ENCODE measurements at regions of chr1 and their contacts with region 1.

Region 1: DNA sequence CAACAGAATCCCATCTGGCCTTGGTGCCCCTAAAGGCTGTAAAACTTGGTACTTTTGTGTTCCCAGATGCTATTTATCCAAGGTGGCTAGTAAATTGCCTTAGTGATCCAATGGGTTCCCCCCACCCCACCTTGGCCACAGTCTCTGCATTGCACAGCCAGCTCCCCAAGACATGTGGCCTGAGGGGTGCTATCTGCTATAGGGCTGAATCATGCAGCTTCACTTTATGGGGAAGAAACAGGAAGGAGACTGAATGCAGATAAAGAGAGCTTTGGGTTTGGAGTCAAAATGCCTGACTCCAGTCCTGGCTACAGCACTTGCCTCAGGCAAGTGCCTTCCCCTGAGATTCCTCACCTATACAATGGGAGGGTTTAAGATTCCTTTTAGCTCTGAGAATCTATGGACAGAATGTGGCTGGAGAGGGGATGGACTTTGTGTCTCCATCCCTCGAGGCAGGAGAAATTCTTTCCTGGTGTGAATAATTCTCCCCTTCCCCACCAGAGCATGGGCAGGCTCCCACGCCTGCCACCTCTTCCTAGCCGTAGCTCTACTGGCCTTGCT is 6.5 kb downstream of the RHEX start:
- DNase-seq: no peak
- ATAC-seq: no peak
- H3K4me3 ChIP-seq: no peak overlapping the region
- H3K27ac ChIP-seq: no peak overlapping the region
- H3K4me1 ChIP-seq: peaks cover 38% of the 10 kb centered on the region
- H3K27me3 ChIP-seq: no peaks in the 10 kb centered on the region
- CTCF ChIP-seq: no peak
- EP300 ChIP-seq: no peak
- POLR2A ChIP-seq: no peak
- RAD21 ChIP-seq: no peak

Region 2: GRCh38 chr1:205680073-205680851 is 379.2 kb before region 1 on chr1 and contains the start of gene SLC45A3:
- CTCF ChIA-PET with region 1: no interaction called
- POLR2A ChIA-PET with region 1: no interaction called
- in situ Hi-C with region 1: no loop called
- intact Hi-C with region 1: loop called (anchors 2 kb)
- DNase-seq: no peak
- ATAC-seq: peak; percentile 33
- H3K4me3 ChIP-seq: peak within 1 kb of the TSS; percentile 62 to 79 (median 74)
- H3K27ac ChIP-seq: no peak within 1 kb of the TSS
- H3K4me1 ChIP-seq: peaks cover 60% of the 10 kb centered on the region
- H3K27me3 ChIP-seq: peaks cover 0 to 2% of the 10 kb centered on the region in 2 experiments; a peak in 2 of 5 replicates
- CTCF ChIP-seq: no peak
- EP300 ChIP-seq: no peak
- POLR2A ChIP-seq: no peak
- RAD21 ChIP-seq: no peak
- total RNA-seq, gene SLC45A3: 1.9 and 3.4 TPM in 2 replicates

Region 3: DNA sequence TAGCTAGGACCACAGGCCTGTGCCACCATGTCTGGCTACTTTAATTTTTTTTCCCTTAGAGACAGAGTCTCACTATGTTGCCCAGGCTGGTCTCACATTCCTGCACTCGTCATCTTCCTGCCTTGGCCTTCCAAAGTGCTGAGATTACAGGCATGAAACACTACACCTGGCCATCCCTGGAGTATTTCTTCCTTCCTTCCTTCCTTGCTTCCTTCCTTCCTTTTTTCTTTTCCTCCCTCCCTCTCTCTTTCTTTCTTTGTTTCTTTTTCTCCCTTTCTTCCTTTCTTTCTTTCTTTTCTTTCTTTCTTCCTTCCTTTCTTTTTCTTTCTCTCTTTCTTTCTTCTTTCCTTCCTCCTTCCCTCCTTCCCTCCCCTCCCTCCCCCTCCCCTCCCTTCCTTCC is 163.1 kb before region 1 on chr1:
- CTCF ChIA-PET with region 1: no interaction called
- POLR2A ChIA-PET with region 1: no interaction called
- in situ Hi-C with region 1: no loop called
- intact Hi-C with region 1: no loop called
- DNase-seq: no peak
- ATAC-seq: no peak
- H3K4me3 ChIP-seq: no peak overlapping the region
- H3K27ac ChIP-seq: no peak overlapping the region
- H3K4me1 ChIP-seq: no peaks in the 10 kb centered on the region
- H3K27me3 ChIP-seq: no peaks in the 10 kb centered on the region
- CTCF ChIP-seq: no peak
- EP300 ChIP-seq: no peak
- POLR2A ChIP-seq: no peak
- RAD21 ChIP-seq: no peak

Region 4: GRCh38 chr1:206133751-206134415 is 74.4 kb after region 1 on chr1:
- CTCF ChIA-PET with region 1: no interaction called
- POLR2A ChIA-PET with region 1: no interaction called
- in situ Hi-C with region 1: no loop called
- intact Hi-C with region 1: no loop called
- DNase-seq: no peak
- ATAC-seq: no peak
- H3K4me3 ChIP-seq: no peak overlapping the region
- H3K27ac ChIP-seq: no peak overlapping the region
- H3K4me1 ChIP-seq: no peaks in the 10 kb centered on the region
- H3K27me3 ChIP-seq: peaks cover 0 to 22% of the 10 kb centered on the region in 2 experiments; a peak in 2 of 5 replicates
- CTCF ChIP-seq: no peak
- EP300 ChIP-seq: no peak
- POLR2A ChIP-seq: no peak
- RAD21 ChIP-seq: no peak

Measured in HepG2 (cell line).